ENCODE measurements at regions of chr3 and their contacts with region 1.

Region 1: GRCh38 chr3:184017672-184018423 is at the start of gene ABCC5:
- ATAC-seq: peak; percentile 95 to 98 (median 96)
- H3K4me3 ChIP-seq: peak within 1 kb of the TSS; percentile 75 to 99 (median 96)
- H3K27ac ChIP-seq: peak within 1 kb of the TSS; percentile 84 to 90
- H3K4me1 ChIP-seq: peaks cover 8 to 20% of the 10 kb centered on the region in 2 donors
- total RNA-seq, gene ABCC5: 25.7 to 93.7 (median 36.4) TPM

Region 2: DNA sequence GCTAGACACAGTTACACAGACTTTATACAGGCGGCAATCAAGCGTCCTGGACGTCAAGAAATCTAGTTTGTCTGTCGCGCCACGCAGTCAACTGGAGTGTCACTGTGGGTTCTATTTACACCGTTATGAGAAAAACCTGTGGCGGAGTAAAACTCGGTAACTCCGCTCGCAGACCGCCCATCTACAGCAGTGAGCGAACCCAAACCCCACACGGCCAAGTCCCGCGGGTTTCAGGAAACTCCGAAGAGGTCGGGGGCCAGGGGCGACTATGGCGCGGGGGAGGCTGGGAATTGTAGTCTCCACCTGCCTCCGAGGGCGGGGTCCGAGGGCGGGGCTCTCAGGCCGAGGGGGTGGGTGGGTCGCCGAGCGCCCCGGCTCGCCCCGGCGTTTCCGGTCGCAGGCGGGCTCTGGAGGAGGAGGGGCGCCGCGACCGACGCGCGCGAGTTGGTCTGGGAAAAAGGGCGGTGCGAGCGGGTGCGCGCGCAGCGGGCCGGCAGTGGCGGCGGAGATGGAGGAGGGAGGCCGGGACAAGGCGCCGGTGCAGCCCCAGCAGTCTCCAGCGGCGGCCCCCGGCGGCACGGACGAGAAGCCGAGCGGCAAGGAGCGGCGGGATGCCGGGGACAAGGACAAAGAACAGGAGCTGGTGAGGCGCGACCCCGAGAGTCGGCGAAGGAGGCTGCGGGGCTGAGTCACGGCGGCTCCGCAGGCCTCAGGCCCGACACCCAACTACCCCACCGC is 281.1 kb after region 1 on chr3 and contains the start of gene PSMD2:
- in situ Hi-C with region 1: loop called in 1 of 9 experiments (anchors 25 kb)
- ATAC-seq: peak; percentile 92 to 97 (median 95)
- H3K4me3 ChIP-seq: peak within 1 kb of the TSS; percentile 58 to 86 (median 73)
- H3K27ac ChIP-seq: peak within 1 kb of the TSS; percentile 67 to 72
- H3K4me1 ChIP-seq: peaks cover 5 to 11% of the 10 kb centered on the region in 2 donors
- total RNA-seq, gene PSMD2: 130 to 248 (median 185) TPM